Dendritic cell treated with granulocyte-macrophage colony-stimulating factor and Interleukin-4, amounts not matched to agents 40 ng/mL and 50 ng/mL, for 4 days (primary cell): ENCODE measurements at regions of chrX and their contacts with region 1.

Region 1: GRCh38 chrX:115330498-115331168 is 41.1 kb downstream of the LUZP4 start:
- H3K4me3 Mint-ChIP-seq: no peak overlapping the region
- H3K27ac Mint-ChIP-seq: no peak overlapping the region
- H3K4me1 Mint-ChIP-seq: no peaks in the 10 kb centered on the region
- H3K27me3 Mint-ChIP-seq: no peaks in the 10 kb centered on the region

Region 2: DNA sequence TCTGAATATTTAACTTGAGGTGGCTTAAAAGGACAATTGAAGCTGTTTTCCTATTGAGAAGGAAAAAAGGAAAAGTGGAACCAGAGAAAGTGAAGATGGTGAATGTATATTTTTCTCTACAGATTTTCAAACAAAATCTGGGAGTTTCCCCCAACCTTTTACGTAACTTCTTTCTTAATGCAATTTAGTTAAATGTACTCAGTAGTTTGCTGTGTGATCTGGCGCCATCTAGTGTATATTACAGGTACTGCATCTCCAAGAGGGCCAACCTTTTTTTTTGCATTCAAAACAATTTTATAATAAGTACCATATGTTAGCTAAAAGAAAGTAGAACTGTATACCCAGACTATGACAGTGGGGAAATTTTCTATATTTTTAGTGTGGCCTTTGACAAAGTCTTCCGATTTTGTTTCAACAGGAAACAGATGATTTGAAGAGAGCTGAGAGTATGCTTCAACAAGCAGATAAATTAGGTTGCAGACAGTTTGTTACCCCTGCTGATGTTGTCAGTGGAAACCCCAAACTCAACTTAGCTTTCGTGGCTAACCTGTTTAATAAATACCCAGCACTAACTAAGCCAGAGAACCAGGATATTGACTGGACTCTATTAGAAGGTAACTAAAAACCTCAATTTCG is 312.4 kb after region 1 on chrX:
- intact Hi-C with region 1: loop called (anchors 1 kb)
- H3K4me3 Mint-ChIP-seq: no peak overlapping the region
- H3K27ac Mint-ChIP-seq: no peak overlapping the region
- H3K4me1 Mint-ChIP-seq: peaks cover 7% of the 10 kb centered on the region
- H3K27me3 Mint-ChIP-seq: no peaks in the 10 kb centered on the region